ENCODE measurements at regions of chr12 and their contacts with region 1.

Region 1: GRCh38 chr12:57765042-57765697 is 1.7 kb downstream of the CYP27B1 start:
- DNase-seq: peak; percentile 70
- ATAC-seq: peak; percentile 72
- H3K4me3 Mint-ChIP-seq: peak overlapping the region; percentile 80
- H3K27ac Mint-ChIP-seq: peak overlapping the region; percentile 70
- H3K4me1 Mint-ChIP-seq: peaks cover 28% of the 10 kb centered on the region
- H3K27me3 Mint-ChIP-seq: peaks cover 6% of the 10 kb centered on the region
- CTCF ChIP-seq: peak; percentile 55

Region 2: DNA sequence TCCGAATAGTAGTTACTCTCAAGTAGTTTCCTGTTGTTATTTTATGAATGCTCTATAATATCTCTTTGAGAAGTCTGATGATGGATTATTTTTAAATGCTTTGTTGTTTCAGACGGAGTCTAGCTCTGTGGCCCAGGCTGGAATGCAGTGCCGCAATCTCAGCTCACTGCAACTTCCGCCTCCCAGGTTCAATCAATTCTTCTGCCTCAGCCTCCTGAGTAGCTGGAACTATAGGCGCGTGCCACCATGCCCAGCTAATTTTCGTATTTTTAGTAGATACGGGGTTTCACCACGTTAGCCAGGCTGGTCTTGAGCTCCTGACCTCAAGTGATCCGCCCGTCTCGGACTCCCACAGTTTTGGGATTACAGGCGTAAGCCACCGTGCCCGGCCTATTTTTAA is 72.7 kb before region 1 on chr12:
- CTCF ChIA-PET with region 1: no interaction called
- POLR2A ChIA-PET with region 1: no interaction called
- intact Hi-C with region 1: no loop called
- DNase-seq: no peak
- ATAC-seq: no peak
- H3K4me3 Mint-ChIP-seq: no peak overlapping the region
- H3K27ac Mint-ChIP-seq: no peak overlapping the region
- H3K4me1 Mint-ChIP-seq: no peaks in the 10 kb centered on the region
- H3K27me3 Mint-ChIP-seq: peaks cover 10% of the 10 kb centered on the region
- CTCF ChIP-seq: no peak

Region 3: DNA sequence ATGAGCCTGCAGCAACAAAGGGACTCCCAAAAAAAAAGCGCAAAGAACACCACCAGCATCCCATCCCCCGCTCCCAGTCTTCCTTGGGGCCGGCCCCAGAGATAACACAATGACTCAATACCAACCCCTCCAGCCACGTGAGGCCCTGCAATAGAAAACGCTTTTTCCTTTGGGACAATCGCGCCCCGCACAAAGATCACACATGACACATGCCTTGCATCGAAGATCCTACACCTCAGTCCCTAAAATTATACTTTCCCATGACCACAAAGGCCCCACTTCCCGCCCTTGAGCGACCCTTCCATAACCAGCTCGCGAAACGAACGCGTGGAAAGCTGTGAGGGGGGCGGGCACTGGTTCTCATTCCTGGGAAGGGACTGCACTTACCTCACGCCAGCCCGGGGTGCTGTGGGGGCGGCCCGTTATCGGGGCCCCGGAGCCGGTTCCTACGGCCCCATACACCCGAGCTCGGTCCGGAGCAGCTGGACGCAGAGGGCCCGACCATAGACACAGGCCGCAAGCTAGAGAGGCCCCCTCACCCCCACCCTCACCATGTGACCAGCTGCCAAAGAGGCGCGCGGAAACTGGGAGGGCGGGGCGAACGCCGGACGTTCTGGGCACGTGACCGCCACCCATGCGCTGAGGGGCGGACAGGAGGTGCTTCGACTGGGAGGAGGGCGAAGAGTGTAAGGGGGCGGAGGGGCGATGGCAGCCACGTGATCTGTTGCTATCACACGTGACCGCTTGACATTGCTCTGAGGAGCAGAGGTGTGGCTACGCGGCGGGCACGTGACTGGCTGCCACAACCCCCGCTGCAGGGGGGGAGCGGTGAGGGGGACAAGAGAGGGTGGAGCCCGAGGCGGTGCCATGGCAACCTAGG is 13.1 kb before region 1 on chr12 and contains the start of gene CDK4:
- CTCF ChIA-PET with region 1: interaction called, 74 read pairs
- POLR2A ChIA-PET with region 1: interaction called, 10 read pairs
- intact Hi-C with region 1: no loop called
- DNase-seq: peak; percentile 100
- ATAC-seq: peak; percentile 82
- H3K4me3 Mint-ChIP-seq: peak within 1 kb of the TSS; percentile 86
- H3K27ac Mint-ChIP-seq: peak within 1 kb of the TSS; percentile 94
- H3K4me1 Mint-ChIP-seq: peaks cover 53% of the 10 kb centered on the region
- H3K27me3 Mint-ChIP-seq: no peaks in the 10 kb centered on the region
- CTCF ChIP-seq: no peak
- total RNA-seq, gene CDK4: 218 to 221 TPM